GM12878 (cell line): ENCODE measurements at regions of chr3 and their contacts with region 1.

Region 1: GRCh38 chr3:145857956-145858355 is 303.0 kb downstream of the PLOD2 start:
- DNase-seq: peak; percentile 4
- ATAC-seq: peak; percentile 97
- H3K4me3 ChIP-seq: no peak overlapping the region
- H3K27ac ChIP-seq: no peak overlapping the region
- H3K4me1 ChIP-seq: no peaks in the 10 kb centered on the region
- H3K27me3 ChIP-seq: no peaks in the 10 kb centered on the region
- CTCF ChIP-seq: no peak
- EP300 ChIP-seq: no peak
- POLR2A ChIP-seq: no peak
- RAD21 ChIP-seq: no peak

Region 2: DNA sequence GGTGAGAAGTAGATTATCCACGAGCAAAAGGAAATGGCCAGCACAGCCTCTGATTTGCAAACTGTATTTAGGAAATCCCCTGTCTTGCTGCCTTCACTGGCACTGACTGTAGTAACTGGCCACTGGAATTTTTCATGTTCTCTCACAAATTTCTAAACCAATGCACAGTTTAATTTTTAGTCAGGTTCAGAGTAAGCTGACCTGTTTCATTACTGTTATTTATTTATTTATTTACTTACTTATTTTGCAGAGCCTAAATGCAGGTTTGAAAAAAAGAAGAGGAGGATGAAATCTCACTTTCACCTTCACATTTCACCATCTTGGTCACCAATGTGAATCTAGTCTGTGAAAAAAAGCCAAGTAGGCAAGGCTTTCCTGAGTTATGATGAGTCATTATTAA is 12.0 kb after region 1 on chr3:
- CTCF ChIA-PET with region 1: interaction called, 4 read pairs
- POLR2A ChIA-PET with region 1: interaction called, 3 read pairs
- RAD21 ChIA-PET with region 1: interaction called, 3 read pairs
- SMC1A ChIA-PET with region 1: interaction called, 25 read pairs
- in situ Hi-C with region 1: no loop called
- intact Hi-C with region 1: no loop called
- DNase-seq: peak; percentile 16
- ATAC-seq: peak; percentile 93
- H3K4me3 ChIP-seq: no peak overlapping the region
- H3K27ac ChIP-seq: no peak overlapping the region
- H3K4me1 ChIP-seq: no peaks in the 10 kb centered on the region
- H3K27me3 ChIP-seq: no peaks in the 10 kb centered on the region
- CTCF ChIP-seq: no peak
- EP300 ChIP-seq: no peak
- POLR2A ChIP-seq: no peak
- RAD21 ChIP-seq: no peak